Endothelial cell of umbilical vein (primary cell): ENCODE measurements at regions of chr14 and their contacts with region 1.

Region 1: GRCh38 chr14:64294672-64295413 is 672 bp upstream of the ESR2 start:
- DNase-seq: peak; percentile 65
- H3K4me3 ChIP-seq: peak overlapping the region; percentile 5 to 50 (median 24)
- H3K27ac ChIP-seq: no peak overlapping the region
- H3K4me1 ChIP-seq: peaks cover 32% of the 10 kb centered on the region
- H3K27me3 ChIP-seq: peaks cover 2 to 3% of the 10 kb centered on the region in 2 experiments
- CTCF ChIP-seq: peak; percentile 88 to 95
- POLR2A ChIP-seq: no peak

Region 2: GRCh38 chr14:63852817-63853731 is 441.8 kb before region 1 on chr14 and contains the start of gene SYNE2:
- CTCF ChIA-PET with region 1: interaction called, 9 read pairs
- POLR2A ChIA-PET with region 1: no interaction called
- dilution Hi-C with region 1: no loop called
- intact Hi-C with region 1: loop called (anchors 2 kb)
- DNase-seq: peak; percentile 78
- H3K4me3 ChIP-seq: peak within 1 kb of the TSS; percentile 66 to 77 (median 77)
- H3K27ac ChIP-seq: peak within 1 kb of the TSS; percentile 66
- H3K4me1 ChIP-seq: peaks cover 15% of the 10 kb centered on the region
- H3K27me3 ChIP-seq: no peaks in the 10 kb centered on the region
- CTCF ChIP-seq: peak in 1 of 2 donors; percentile 17
- POLR2A ChIP-seq: peak; percentile 14
- total RNA-seq, gene SYNE2: 42.7 and 53.7 TPM in 2 replicates

Region 3: DNA sequence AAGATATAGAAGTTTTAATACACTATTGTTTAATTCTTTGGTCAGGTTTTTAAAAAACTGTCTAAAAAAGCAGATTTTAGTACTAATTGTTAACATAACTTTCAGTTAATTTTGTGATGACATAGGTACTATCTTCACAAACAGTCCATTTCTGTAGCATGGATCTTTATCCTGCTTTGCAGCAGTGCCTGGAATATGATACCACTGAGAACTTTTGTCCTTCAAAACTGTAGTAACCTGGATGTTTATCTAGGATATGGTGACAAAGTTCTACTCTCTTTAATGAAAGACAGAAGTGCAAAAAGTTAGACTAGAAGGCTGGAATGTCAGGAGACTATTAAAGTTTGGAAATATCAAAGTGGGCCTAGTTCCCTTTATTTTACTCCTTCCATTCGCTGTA is 282.1 kb before region 1 on chr14:
- CTCF ChIA-PET with region 1: interaction called, 71 read pairs
- POLR2A ChIA-PET with region 1: no interaction called
- dilution Hi-C with region 1: no loop called
- intact Hi-C with region 1: loop called (anchors 2 kb)
- DNase-seq: no peak
- H3K4me3 ChIP-seq: no peak overlapping the region
- H3K27ac ChIP-seq: no peak overlapping the region
- H3K4me1 ChIP-seq: no peaks in the 10 kb centered on the region
- H3K27me3 ChIP-seq: no peaks in the 10 kb centered on the region
- CTCF ChIP-seq: no peak
- POLR2A ChIP-seq: no peak

Region 4: GRCh38 chr14:64060648-64061096 is 234.2 kb before region 1 on chr14:
- CTCF ChIA-PET with region 1: interaction called, 30 read pairs
- POLR2A ChIA-PET with region 1: no interaction called
- dilution Hi-C with region 1: no loop called
- intact Hi-C with region 1: loop called (anchors 2 kb)
- DNase-seq: peak; percentile 10
- H3K4me3 ChIP-seq: no peak overlapping the region
- H3K27ac ChIP-seq: no peak overlapping the region
- H3K4me1 ChIP-seq: no peaks in the 10 kb centered on the region
- H3K27me3 ChIP-seq: no peaks in the 10 kb centered on the region
- CTCF ChIP-seq: peak; percentile 53 to 56
- POLR2A ChIP-seq: no peak

Region 5: DNA sequence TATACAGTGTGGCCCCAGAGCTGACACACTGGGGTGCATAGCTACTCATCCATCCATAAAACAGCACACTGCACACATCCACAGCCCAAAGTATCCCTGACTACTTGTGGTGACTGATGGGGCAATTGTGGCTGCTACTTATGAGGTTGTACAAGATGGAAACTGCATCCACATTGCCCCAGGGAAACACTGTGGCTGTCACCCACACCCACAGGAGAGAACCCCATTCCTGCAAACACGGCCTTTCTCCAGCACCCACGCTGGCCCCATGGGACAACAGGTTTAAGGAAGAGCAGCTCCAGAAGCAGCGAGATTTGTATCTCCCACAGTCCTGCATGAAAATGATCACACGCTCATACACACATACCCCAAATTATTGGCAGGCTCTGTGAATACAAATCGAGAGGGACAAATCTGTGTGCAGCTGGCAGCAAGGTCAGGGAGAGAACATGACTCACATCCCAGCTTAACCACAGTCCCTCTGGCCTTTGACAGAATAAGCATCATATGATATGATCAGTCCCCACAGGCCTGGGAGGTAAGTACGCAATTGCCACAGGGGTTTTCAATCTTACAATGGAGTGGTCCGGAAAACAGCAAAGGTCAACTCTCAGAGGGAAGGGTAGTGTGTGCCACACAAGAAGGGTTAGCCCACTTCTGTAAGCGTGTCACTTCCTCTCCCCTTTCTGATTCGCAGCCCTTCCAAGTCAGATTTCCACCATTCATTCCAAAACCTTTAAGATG is 62.6 kb before region 1 on chr14:
- CTCF ChIA-PET with region 1: interaction called, 20 read pairs
- POLR2A ChIA-PET with region 1: no interaction called
- dilution Hi-C with region 1: no loop called
- intact Hi-C with region 1: loop called (anchors 1 kb)
- DNase-seq: peak; percentile 95
- H3K4me3 ChIP-seq: no peak overlapping the region
- H3K27ac ChIP-seq: peak overlapping the region; percentile 88
- H3K4me1 ChIP-seq: peaks cover 24% of the 10 kb centered on the region
- H3K27me3 ChIP-seq: no peaks in the 10 kb centered on the region
- CTCF ChIP-seq: no peak
- POLR2A ChIP-seq: peak; percentile 49

Region 6: GRCh38 chr14:64488590-64489099 is 193.8 kb after region 1 on chr14:
- CTCF ChIA-PET with region 1: no interaction called
- POLR2A ChIA-PET with region 1: no interaction called
- dilution Hi-C with region 1: no loop called
- intact Hi-C with region 1: no loop called
- DNase-seq: no peak
- H3K4me3 ChIP-seq: no peak overlapping the region
- H3K27ac ChIP-seq: no peak overlapping the region
- H3K4me1 ChIP-seq: no peaks in the 10 kb centered on the region
- H3K27me3 ChIP-seq: no peaks in the 10 kb centered on the region
- CTCF ChIP-seq: no peak
- POLR2A ChIP-seq: no peak

Region 7: DNA sequence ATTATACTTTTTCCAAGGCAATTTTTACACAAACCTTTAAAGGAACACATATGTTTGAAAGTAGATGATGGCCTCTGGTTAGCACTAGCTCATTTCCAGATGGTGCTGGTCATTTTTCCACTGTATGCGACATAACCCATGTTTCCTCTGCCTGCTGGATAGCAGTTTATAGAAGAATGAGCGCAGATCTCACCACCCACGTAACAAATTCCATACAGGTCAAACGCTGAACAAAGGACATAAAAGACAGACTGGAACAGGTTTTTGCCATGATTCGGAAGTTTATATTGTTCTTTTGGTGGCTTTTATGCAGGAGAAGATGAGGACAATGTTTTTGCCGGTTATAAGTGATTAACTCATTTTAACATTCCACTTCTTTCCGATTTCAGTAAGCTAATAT is 285.6 kb after region 1 on chr14:
- CTCF ChIA-PET with region 1: no interaction called
- POLR2A ChIA-PET with region 1: no interaction called
- dilution Hi-C with region 1: no loop called
- intact Hi-C with region 1: no loop called
- DNase-seq: peak; percentile 44
- H3K4me3 ChIP-seq: no peak overlapping the region
- H3K27ac ChIP-seq: no peak overlapping the region
- H3K4me1 ChIP-seq: peaks cover 7% of the 10 kb centered on the region
- H3K27me3 ChIP-seq: no peaks in the 10 kb centered on the region
- CTCF ChIP-seq: no peak
- POLR2A ChIP-seq: no peak